ENCODE measurements at regions of chr12 and their contacts with region 1.

Region 1: GRCh38 chr12:74747305-74747704 is 209.7 kb downstream of the ATXN7L3B start:
- DNase-seq: no peak

Region 2: DNA sequence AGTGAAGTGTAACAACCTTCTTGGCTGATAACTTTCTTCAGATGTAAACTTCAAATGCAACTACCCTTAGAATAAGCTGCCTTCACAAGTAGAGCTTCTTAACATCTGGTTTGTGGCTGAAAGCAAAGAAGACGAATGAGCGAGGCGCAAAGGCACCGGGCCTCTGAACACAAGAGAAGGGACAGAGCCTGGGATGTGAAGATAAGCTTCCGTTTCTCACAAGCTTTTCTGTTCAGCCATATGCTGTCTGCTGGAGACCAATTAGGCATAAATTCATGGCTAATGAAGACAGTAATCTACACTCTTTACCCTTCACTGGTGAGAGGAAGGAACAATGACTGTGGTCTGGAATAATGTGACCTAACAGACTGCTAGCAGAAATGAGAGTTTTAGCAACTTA is 14.5 kb before region 1 on chr12:
- CTCF ChIA-PET with region 1: no interaction called
- POLR2A ChIA-PET with region 1: no interaction called
- DNase-seq: no peak

Region 3: DNA sequence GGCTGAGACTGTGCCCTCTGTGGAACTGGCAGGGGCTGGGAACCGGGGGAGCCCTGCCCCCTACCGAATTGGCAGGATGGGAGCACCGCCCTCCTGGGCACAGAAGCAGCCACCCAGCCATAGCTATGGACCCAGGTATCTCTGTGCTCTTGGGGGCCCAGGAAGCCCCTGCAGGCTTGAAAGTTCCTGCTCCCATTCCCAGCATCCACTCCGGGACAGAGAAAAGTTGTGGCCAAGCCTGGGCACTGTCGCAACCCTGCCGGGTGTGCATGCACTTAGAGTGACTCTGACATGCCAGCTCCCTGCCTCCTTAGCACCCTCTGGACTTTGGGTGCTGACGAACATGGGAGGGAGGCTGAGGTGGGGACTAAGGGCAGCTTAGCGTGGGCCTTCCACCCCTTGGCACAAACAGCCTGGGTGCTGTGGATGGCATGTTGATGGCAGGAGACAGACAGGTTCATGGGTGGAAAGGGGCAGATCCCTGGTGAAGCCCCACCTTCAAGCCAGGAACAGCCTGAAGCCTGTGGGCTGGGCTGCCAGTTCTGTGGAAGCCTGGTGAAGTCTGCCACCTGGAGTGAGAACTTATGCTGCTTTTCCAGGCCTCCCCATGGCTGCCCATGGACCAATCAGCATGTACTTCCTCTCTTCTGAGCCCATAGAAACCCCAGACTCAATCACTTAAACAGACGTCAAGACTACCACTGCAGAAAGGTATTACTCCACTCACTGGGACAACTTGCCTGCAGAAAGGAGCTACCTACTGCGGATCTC is 69.3 kb after region 1 on chr12:
- CTCF ChIA-PET with region 1: interaction called, 10 read pairs
- POLR2A ChIA-PET with region 1: no interaction called
- DNase-seq: no peak

Measured in HEK293T (cell line).